ENCODE measurements at regions of chr16 and their contacts with region 1.

Region 1: DNA sequence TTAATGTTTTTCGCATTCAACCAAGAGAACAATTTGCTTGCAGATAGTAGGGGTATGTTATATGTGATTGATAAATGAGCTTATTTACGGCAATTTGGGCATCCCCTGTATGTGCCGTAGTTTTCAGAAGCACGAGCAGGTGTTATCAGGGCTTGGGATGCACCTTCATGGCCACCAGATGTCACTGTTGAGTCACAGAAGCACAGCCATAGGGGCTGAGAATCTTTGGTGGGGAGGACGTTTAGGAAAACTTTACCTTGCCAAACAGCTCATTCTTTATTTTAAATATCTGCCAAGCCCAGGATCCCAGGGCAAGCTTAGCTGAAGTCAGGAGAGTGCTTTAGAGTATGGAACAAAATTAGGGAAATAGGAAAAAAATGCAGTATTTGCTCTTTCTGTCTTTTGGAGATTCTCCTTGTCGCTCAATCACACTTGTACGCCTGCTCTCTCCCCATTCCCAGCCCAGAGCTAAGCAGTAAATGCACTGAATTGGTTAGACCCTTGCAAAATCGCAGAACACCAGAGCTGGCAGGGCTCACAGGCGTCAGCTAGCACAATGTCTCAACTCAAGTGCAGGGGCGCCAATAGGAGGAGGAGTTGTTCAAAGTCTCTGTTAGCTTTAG is 93.6 kb upstream of the MPHOSPH6 start:
- DNase-seq: peak; percentile 51
- H3K4me3 ChIP-seq: no peak overlapping the region; a peak in 1 of 4 replicates
- H3K27ac ChIP-seq: no peak overlapping the region
- H3K4me1 ChIP-seq: no peaks in the 10 kb centered on the region
- H3K27me3 ChIP-seq: peaks cover 14% of the 10 kb centered on the region
- CTCF ChIP-seq: peak; percentile 97
- EP300 ChIP-seq: no peak
- RAD21 ChIP-seq: peak; percentile 89

Region 2: GRCh38 chr16:82229796-82230619 is 33.6 kb before region 1 on chr16:
- CTCF ChIA-PET with region 1: interaction called, 13 read pairs
- POLR2A ChIA-PET with region 1: no interaction called
- DNase-seq: peak; percentile 39
- H3K4me3 ChIP-seq: peak overlapping the region in 1 of 2 experiments; percentile 21; a peak in 1 of 4 replicates
- H3K27ac ChIP-seq: no peak overlapping the region
- H3K4me1 ChIP-seq: no peaks in the 10 kb centered on the region
- H3K27me3 ChIP-seq: peaks cover 6% of the 10 kb centered on the region; the same call in 1 of the 2 replicates
- CTCF ChIP-seq: peak; percentile 85
- EP300 ChIP-seq: no peak
- RAD21 ChIP-seq: peak; percentile 78

Region 3: GRCh38 chr16:82248677-82249076 is 15.0 kb before region 1 on chr16:
- CTCF ChIA-PET with region 1: interaction called, 39 read pairs
- POLR2A ChIA-PET with region 1: no interaction called
- DNase-seq: no peak
- H3K4me3 ChIP-seq: no peak overlapping the region
- H3K27ac ChIP-seq: no peak overlapping the region
- H3K4me1 ChIP-seq: no peaks in the 10 kb centered on the region
- H3K27me3 ChIP-seq: no peaks in the 10 kb centered on the region
- CTCF ChIP-seq: no peak
- EP300 ChIP-seq: no peak
- RAD21 ChIP-seq: no peak

Region 4: GRCh38 chr16:82287937-82288336 is 24.3 kb after region 1 on chr16:
- CTCF ChIA-PET with region 1: interaction called, 10 read pairs
- POLR2A ChIA-PET with region 1: no interaction called
- DNase-seq: no peak
- H3K4me3 ChIP-seq: no peak overlapping the region
- H3K27ac ChIP-seq: no peak overlapping the region
- H3K4me1 ChIP-seq: no peaks in the 10 kb centered on the region
- H3K27me3 ChIP-seq: no peaks in the 10 kb centered on the region; the same call in 1 of the 2 replicates
- CTCF ChIP-seq: no peak
- EP300 ChIP-seq: no peak
- RAD21 ChIP-seq: no peak

Region 5: DNA sequence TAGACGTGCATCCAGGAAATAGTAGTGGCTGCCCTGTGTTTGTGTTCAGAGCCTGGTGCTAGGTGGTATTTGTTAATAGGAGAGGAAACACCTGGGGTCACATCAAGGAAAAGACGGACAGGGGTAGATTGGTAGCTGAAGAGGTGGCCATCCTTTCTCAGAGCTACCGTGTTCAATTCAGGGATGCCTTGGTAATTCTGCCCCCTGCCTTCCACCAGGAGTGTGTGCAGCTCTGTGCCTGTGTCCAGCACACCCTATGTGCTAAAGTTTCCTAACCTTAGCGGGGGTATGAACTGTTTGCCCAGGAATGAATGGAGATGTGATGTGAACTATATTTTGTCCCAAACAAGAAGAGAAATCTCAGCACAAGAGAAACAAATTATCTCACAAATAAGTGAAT is 80.5 kb after region 1 on chr16:
- CTCF ChIA-PET with region 1: interaction called, 10 read pairs
- POLR2A ChIA-PET with region 1: no interaction called
- DNase-seq: no peak
- H3K4me3 ChIP-seq: no peak overlapping the region
- H3K27ac ChIP-seq: no peak overlapping the region
- H3K4me1 ChIP-seq: no peaks in the 10 kb centered on the region
- H3K27me3 ChIP-seq: no peaks in the 10 kb centered on the region
- CTCF ChIP-seq: peak; percentile 28; the same call in 1 of the 2 replicates
- EP300 ChIP-seq: no peak
- RAD21 ChIP-seq: peak; percentile 37; the same call in 1 of the 2 replicates

Region 6: GRCh38 chr16:82580298-82580890 is 316.8 kb after region 1 on chr16:
- CTCF ChIA-PET with region 1: interaction called, 15 read pairs
- POLR2A ChIA-PET with region 1: no interaction called
- DNase-seq: peak; percentile 22
- H3K4me3 ChIP-seq: no peak overlapping the region
- H3K27ac ChIP-seq: no peak overlapping the region
- H3K4me1 ChIP-seq: no peaks in the 10 kb centered on the region
- H3K27me3 ChIP-seq: no peaks in the 10 kb centered on the region
- CTCF ChIP-seq: peak; percentile 45
- EP300 ChIP-seq: no peak
- RAD21 ChIP-seq: peak; percentile 64

Measured in SK-N-SH (cell line).